Astrocyte of the cerebellum (primary cell): ENCODE measurements at regions of chr19 and their contacts with region 1.

Region 1: GRCh38 chr19:1992759-1993260 is 22.7 kb downstream of the BTBD2 start:
- DNase-seq: no peak
- H3K4me3 ChIP-seq: no peak overlapping the region
- CTCF ChIP-seq: no peak

Region 2: DNA sequence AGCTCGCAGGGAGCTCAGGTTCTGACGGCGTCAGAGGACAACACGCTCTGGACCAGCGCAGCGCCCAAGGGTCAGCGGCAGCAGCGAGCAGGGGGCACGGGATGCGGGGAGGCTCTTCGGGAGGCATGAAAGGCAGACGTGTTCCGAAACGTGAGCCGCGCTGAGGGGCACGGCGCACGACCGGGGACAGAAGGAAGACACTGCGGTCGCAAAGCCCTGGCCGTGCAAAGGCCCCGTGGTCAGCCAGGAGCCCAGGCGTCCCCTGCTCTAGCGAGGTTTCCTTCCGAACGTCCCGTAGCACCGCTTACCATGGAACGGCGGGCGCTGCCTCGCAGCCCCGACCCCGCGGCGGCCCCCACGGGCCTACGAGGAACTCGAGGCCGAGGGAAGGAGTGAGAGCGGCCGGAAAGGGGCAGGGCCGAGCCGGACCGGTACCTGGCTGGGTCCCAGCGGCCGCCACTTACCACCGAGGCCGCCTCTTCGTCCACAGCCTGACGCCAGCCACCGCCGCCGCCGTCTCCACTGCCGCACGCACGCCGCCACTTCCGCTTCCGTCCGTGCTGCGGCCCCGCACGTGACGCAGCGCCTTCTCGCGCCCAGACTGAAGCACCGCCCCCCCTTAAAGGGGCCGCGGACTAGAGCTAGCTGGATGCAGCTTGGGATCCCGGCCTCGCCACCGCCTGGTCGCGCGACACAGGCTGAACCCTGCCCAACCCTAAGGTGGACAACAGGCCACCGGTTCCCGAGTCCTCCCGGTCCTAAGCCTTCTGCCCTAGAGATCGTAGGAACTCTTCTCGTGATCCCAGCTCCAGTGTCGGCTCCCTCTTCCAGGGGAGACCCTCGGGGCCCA is 116.9 kb before region 1 on chr19:
- in situ Hi-C with region 1: loop called (anchors 10 kb)
- DNase-seq: peak; percentile 46
- H3K4me3 ChIP-seq: peak overlapping the region; percentile 96
- CTCF ChIP-seq: no peak

Region 3: GRCh38 chr19:1935484-1936208 is 57.2 kb before region 1 on chr19:
- in situ Hi-C with region 1: loop called (anchors 5 kb)
- DNase-seq: no peak
- H3K4me3 ChIP-seq: no peak overlapping the region
- CTCF ChIP-seq: no peak

Region 4: DNA sequence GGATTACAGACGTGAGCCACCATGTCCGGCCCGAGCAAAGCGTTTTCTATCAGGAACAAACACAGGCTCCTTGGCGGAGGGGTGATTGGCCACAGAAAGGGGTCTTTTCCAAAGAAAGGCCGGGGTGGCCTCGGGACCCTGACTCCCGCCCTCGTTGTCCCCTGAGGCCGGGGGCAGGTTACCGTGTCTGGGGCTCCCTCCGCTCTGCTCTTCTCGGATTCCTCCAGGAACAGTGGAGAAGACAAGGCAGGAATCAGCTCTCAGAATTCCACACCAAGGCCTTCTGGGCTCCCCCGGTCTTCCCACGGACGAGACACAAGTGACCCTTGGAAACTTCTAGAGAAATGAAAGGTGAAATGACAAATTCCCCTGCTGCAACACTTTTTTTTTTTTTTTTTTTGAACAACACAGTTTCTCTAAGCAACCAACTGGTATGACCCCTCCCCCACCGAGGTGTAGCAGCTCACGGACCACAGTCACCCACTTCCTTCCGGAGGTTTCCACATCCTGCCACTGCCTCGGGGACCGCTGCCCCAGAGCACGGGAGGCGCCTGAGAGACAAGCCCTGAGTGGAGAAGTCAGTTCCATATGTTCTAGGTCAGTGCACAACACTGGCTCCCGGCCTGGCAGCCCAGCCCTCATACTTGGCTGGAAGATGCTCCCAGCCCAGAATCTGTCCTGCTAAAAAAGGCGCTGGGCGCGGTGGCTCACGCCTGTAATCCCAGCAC is 92.3 kb after region 1 on chr19:
- in situ Hi-C with region 1: loop called (anchors 10 kb)
- DNase-seq: no peak
- H3K4me3 ChIP-seq: no peak overlapping the region
- CTCF ChIP-seq: no peak

Region 5: GRCh38 chr19:2096034-2096479 is 103.2 kb after region 1 on chr19 and contains the start of gene MOB3A:
- in situ Hi-C with region 1: no loop called
- DNase-seq: peak; percentile 84
- H3K4me3 ChIP-seq: peak within 1 kb of the TSS; percentile 69
- CTCF ChIP-seq: peak; percentile 46